PC-9 (cell line): ENCODE measurements at regions of chr12 and their contacts with region 1.

Region 1: GRCh38 chr12:54958048-54958658 is 26.4 kb downstream of the TESPA1 start:
- DNase-seq: peak; percentile 27 to 37
- H3K4me3 ChIP-seq: no peak overlapping the region
- H3K27ac ChIP-seq: no peak overlapping the region
- H3K4me1 ChIP-seq: no peaks in the 10 kb centered on the region
- H3K27me3 ChIP-seq: peaks cover 44% of the 10 kb centered on the region
- CTCF ChIP-seq: peak; percentile 79

Region 2: GRCh38 chr12:54579696-54580333 is 378.3 kb before region 1 on chr12:
- CTCF ChIA-PET with region 1: interaction called, 3 read pairs
- POLR2A ChIA-PET with region 1: no interaction called
- intact Hi-C with region 1: loop called (anchors 5 kb)
- DNase-seq: peak in 1 of 2 experiments; percentile 75
- H3K4me3 ChIP-seq: no peak overlapping the region
- H3K27ac ChIP-seq: no peak overlapping the region
- H3K4me1 ChIP-seq: no peaks in the 10 kb centered on the region
- H3K27me3 ChIP-seq: peaks cover 94% of the 10 kb centered on the region
- CTCF ChIP-seq: peak; percentile 98

Region 3: DNA sequence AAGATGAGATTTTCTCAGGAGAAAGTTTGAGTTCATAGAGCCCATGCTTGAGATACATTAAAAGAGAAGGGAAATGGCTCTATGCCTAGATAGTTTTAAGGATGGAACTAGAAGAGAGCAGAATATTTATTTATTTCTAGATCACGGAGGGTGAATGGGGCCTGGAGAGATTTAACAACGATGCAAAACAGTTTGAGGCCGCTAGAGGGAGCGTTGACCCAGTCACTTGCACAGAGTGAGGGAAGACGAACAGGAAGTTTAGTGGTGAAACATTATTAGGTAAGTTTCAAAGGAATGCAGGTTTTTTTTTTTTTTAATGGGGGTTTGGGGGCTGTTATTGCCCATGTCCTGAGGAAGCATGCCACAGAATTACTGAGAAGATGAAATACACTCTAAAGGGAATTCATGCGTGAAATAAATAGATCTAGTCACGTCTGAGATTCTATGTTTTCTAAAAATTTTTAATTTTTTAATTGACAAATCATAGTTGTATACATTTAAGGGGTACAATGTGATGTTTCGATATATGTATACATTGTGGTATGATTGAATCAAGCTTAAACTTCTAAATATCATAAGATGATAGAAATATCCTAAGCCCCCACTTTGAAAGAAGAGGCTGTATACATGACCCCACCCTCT is 354.9 kb before region 1 on chr12:
- CTCF ChIA-PET with region 1: no interaction called
- POLR2A ChIA-PET with region 1: no interaction called
- intact Hi-C with region 1: loop called (anchors 10 kb)
- DNase-seq: peak; percentile 44
- H3K4me3 ChIP-seq: no peak overlapping the region
- H3K27ac ChIP-seq: no peak overlapping the region
- H3K4me1 ChIP-seq: no peaks in the 10 kb centered on the region
- H3K27me3 ChIP-seq: peaks cover 21% of the 10 kb centered on the region; the same call in 1 of the 2 replicates
- CTCF ChIP-seq: peak; percentile 78

Region 4: GRCh38 chr12:54701940-54702592 is 256.1 kb before region 1 on chr12:
- CTCF ChIA-PET with region 1: no interaction called
- POLR2A ChIA-PET with region 1: no interaction called
- intact Hi-C with region 1: loop called (anchors 2 kb)
- DNase-seq: no peak
- H3K4me3 ChIP-seq: no peak overlapping the region
- H3K27ac ChIP-seq: no peak overlapping the region
- H3K4me1 ChIP-seq: no peaks in the 10 kb centered on the region
- H3K27me3 ChIP-seq: peaks cover 22% of the 10 kb centered on the region; the same call in 1 of the 2 replicates
- CTCF ChIP-seq: peak; percentile 75

Region 5: GRCh38 chr12:54749191-54749818 is 208.8 kb before region 1 on chr12:
- CTCF ChIA-PET with region 1: no interaction called
- POLR2A ChIA-PET with region 1: no interaction called
- intact Hi-C with region 1: loop called (anchors 2 kb)
- DNase-seq: no peak
- H3K4me3 ChIP-seq: no peak overlapping the region
- H3K27ac ChIP-seq: no peak overlapping the region
- H3K4me1 ChIP-seq: no peaks in the 10 kb centered on the region
- H3K27me3 ChIP-seq: no peaks in the 10 kb centered on the region
- CTCF ChIP-seq: peak; percentile 82

Region 6: DNA sequence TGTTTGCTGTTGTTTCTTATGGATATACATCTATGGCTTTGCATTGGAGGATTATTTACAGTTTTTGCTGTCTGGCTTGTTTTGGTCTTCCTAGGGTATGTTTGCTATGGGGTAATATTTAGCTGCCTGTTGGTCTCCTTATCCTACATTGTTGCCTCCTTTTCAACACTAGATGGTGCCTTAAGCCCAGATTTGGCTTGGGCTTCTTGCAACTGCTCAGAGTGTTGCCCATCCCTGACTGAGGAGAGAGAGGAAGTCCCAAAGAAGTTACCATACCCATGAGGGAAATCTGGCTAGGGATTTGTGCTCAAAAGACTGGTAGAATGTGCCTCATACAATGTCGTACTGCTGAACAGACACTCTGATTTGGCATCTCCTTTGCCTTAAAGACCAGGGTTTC is 198.4 kb before region 1 on chr12:
- CTCF ChIA-PET with region 1: no interaction called
- POLR2A ChIA-PET with region 1: no interaction called
- intact Hi-C with region 1: loop called (anchors 1 kb)
- DNase-seq: no peak
- H3K4me3 ChIP-seq: no peak overlapping the region
- H3K27ac ChIP-seq: no peak overlapping the region
- H3K4me1 ChIP-seq: no peaks in the 10 kb centered on the region
- H3K27me3 ChIP-seq: 0 out of 2 replicates have a peak, but pooled peaks cover 13% of the 10 kb centered on the region
- CTCF ChIP-seq: peak; percentile 54

Region 7: GRCh38 chr12:54853995-54854566 is 104.1 kb before region 1 on chr12 and contains the start of gene MUCL1:
- CTCF ChIA-PET with region 1: no interaction called
- POLR2A ChIA-PET with region 1: no interaction called
- intact Hi-C with region 1: loop called (anchors 1 kb)
- DNase-seq: peak in 1 of 2 experiments; percentile 17
- H3K4me3 ChIP-seq: no peak within 1 kb of the TSS
- H3K27ac ChIP-seq: no peak within 1 kb of the TSS
- H3K4me1 ChIP-seq: no peaks in the 10 kb centered on the region
- H3K27me3 ChIP-seq: peaks cover 19% of the 10 kb centered on the region; the same call in 1 of the 2 replicates
- CTCF ChIP-seq: peak; percentile 81
- total RNA-seq, gene MUCL1: not detected in 2 replicates